A673 (cell line): ENCODE measurements at regions of chr18 and their contacts with region 1.

Region 1: GRCh38 chr18:72700961-72701718 is 157.0 kb upstream of the CBLN2 start:
- DNase-seq: peak; percentile 39
- H3K4me3 ChIP-seq: no peak overlapping the region
- H3K27ac ChIP-seq: no peak overlapping the region
- H3K4me1 ChIP-seq: no peaks in the 10 kb centered on the region
- H3K27me3 ChIP-seq: peaks cover 2% of the 10 kb centered on the region
- CTCF ChIP-seq: peak; percentile 65

Region 2: GRCh38 chr18:71743634-71744033 is 957.5 kb before region 1 on chr18:
- CTCF ChIA-PET with region 1: no interaction called
- POLR2A ChIA-PET with region 1: no interaction called
- intact Hi-C with region 1: no loop called
- DNase-seq: no peak
- H3K4me3 ChIP-seq: no peak overlapping the region
- H3K27ac ChIP-seq: no peak overlapping the region
- H3K4me1 ChIP-seq: no peaks in the 10 kb centered on the region
- H3K27me3 ChIP-seq: no peaks in the 10 kb centered on the region
- CTCF ChIP-seq: no peak

Region 3: DNA sequence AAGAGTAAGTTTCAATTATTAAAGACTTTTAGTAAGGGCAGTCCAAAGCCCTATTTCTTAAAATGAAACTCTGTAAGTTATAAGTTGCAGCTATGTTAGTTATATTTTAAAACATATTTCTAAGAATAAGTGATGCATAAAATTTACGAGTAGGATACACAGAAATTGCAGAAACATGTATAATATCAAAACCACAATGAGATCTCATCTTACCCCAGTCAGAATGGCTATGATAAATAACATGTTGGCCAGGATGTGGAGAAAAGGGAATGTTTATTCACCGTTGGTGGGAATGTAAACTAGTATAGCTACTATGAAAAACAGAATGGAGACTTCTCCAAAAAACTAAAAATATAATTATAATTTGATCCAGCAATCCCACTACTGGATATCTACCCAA is 358.2 kb before region 1 on chr18:
- CTCF ChIA-PET with region 1: no interaction called
- POLR2A ChIA-PET with region 1: no interaction called
- intact Hi-C with region 1: no loop called
- DNase-seq: no peak
- H3K4me3 ChIP-seq: no peak overlapping the region
- H3K27ac ChIP-seq: no peak overlapping the region
- H3K4me1 ChIP-seq: no peaks in the 10 kb centered on the region
- H3K27me3 ChIP-seq: no peaks in the 10 kb centered on the region
- CTCF ChIP-seq: no peak

Region 4: GRCh38 chr18:72652990-72653593 is 48.0 kb before region 1 on chr18:
- CTCF ChIA-PET with region 1: interaction called, 12 read pairs
- POLR2A ChIA-PET with region 1: no interaction called
- intact Hi-C with region 1: no loop called
- DNase-seq: peak; percentile 75
- H3K4me3 ChIP-seq: no peak overlapping the region
- H3K27ac ChIP-seq: no peak overlapping the region
- H3K4me1 ChIP-seq: no peaks in the 10 kb centered on the region
- H3K27me3 ChIP-seq: no peaks in the 10 kb centered on the region
- CTCF ChIP-seq: peak; percentile 81

Region 5: GRCh38 chr18:72742002-72742401 is 40.9 kb after region 1 on chr18:
- CTCF ChIA-PET with region 1: no interaction called
- POLR2A ChIA-PET with region 1: interaction called, 12 read pairs
- intact Hi-C with region 1: no loop called
- DNase-seq: no peak
- H3K4me3 ChIP-seq: no peak overlapping the region
- H3K27ac ChIP-seq: no peak overlapping the region
- H3K4me1 ChIP-seq: no peaks in the 10 kb centered on the region
- H3K27me3 ChIP-seq: peaks cover 3% of the 10 kb centered on the region
- CTCF ChIP-seq: no peak

Region 6: GRCh38 chr18:73842795-73843394 is 1141.8 kb after region 1 on chr18:
- CTCF ChIA-PET with region 1: no interaction called
- POLR2A ChIA-PET with region 1: no interaction called
- intact Hi-C with region 1: loop called (anchors 5 kb)
- DNase-seq: peak; percentile 61
- H3K4me3 ChIP-seq: no peak overlapping the region
- H3K27ac ChIP-seq: no peak overlapping the region
- H3K4me1 ChIP-seq: no peaks in the 10 kb centered on the region
- H3K27me3 ChIP-seq: no peaks in the 10 kb centered on the region
- CTCF ChIP-seq: peak; percentile 96

Region 7: GRCh38 chr18:74116633-74117554 is 1415.8 kb after region 1 on chr18:
- CTCF ChIA-PET with region 1: no interaction called
- POLR2A ChIA-PET with region 1: no interaction called
- intact Hi-C with region 1: loop called (anchors 10 kb)
- DNase-seq: peak; percentile 61
- H3K4me3 ChIP-seq: no peak overlapping the region
- H3K27ac ChIP-seq: no peak overlapping the region
- H3K4me1 ChIP-seq: peaks cover 4% of the 10 kb centered on the region
- H3K27me3 ChIP-seq: no peaks in the 10 kb centered on the region
- CTCF ChIP-seq: peak; percentile 75

Region 8: GRCh38 chr18:74342416-74343043 is 1641.4 kb after region 1 on chr18:
- CTCF ChIA-PET with region 1: no interaction called
- POLR2A ChIA-PET with region 1: no interaction called
- intact Hi-C with region 1: loop called (anchors 2 kb)
- DNase-seq: peak; percentile 52
- H3K4me3 ChIP-seq: no peak overlapping the region
- H3K27ac ChIP-seq: no peak overlapping the region
- H3K4me1 ChIP-seq: no peaks in the 10 kb centered on the region
- H3K27me3 ChIP-seq: no peaks in the 10 kb centered on the region
- CTCF ChIP-seq: peak; percentile 71